ENCODE measurements at regions of chr6 and their contacts with region 1.

Region 1: GRCh38 chr6:7615611-7616383 is 25.8 kb downstream of the SNRNP48 start:
- DNase-seq: peak; percentile 41
- ATAC-seq: peak; percentile 51
- H3K4me3 Mint-ChIP-seq: no peak overlapping the region
- H3K27ac Mint-ChIP-seq: no peak overlapping the region
- H3K4me1 Mint-ChIP-seq: peaks cover 15% of the 10 kb centered on the region
- H3K27me3 Mint-ChIP-seq: peaks cover 2% of the 10 kb centered on the region
- CTCF ChIP-seq: peak; percentile 79

Region 2: DNA sequence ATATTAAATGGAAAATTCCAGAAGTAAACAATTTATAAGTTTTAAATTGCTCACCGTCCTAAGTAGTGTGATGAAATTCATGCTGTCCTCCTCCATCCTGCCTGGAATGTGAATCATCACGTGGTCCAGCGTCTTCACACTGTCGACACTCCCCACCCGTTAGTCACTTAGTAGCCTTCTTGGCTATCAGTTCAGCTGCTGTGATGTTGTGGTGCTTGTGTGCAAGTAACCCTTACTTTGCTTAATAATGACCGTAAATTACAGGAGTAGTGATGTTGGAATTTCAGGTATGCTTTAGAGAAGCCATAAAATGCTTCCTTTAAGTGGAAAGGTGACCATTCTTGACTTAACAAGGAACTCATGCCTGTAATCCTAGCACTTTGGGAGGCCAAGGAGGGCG is 201.0 kb before region 1 on chr6:
- CTCF ChIA-PET with region 1: no interaction called
- POLR2A ChIA-PET with region 1: no interaction called
- intact Hi-C with region 1: loop called (anchors 10 kb)
- DNase-seq: no peak
- ATAC-seq: no peak
- H3K4me3 Mint-ChIP-seq: no peak overlapping the region
- H3K27ac Mint-ChIP-seq: no peak overlapping the region
- H3K4me1 Mint-ChIP-seq: no peaks in the 10 kb centered on the region
- H3K27me3 Mint-ChIP-seq: no peaks in the 10 kb centered on the region
- CTCF ChIP-seq: no peak

Region 3: GRCh38 chr6:7594579-7595125 is 21.1 kb before region 1 on chr6:
- CTCF ChIA-PET with region 1: interaction called, 16 read pairs
- POLR2A ChIA-PET with region 1: interaction called, 3 read pairs
- intact Hi-C with region 1: no loop called
- DNase-seq: no peak
- ATAC-seq: no peak
- H3K4me3 Mint-ChIP-seq: no peak overlapping the region
- H3K27ac Mint-ChIP-seq: no peak overlapping the region
- H3K4me1 Mint-ChIP-seq: peaks cover 31% of the 10 kb centered on the region
- H3K27me3 Mint-ChIP-seq: no peaks in the 10 kb centered on the region
- CTCF ChIP-seq: no peak